ENCODE measurements at regions of chrX and their contacts with region 1.

Region 1: GRCh38 chrX:102712952-102713625 is 841 bp downstream of the GPRASP2 start:
- DNase-seq: peak; percentile 14 to 68
- ATAC-seq: peak; percentile 77 to 93 (median 82)
- H3K4me3 ChIP-seq: peak overlapping the region; percentile 60 to 81 (median 76)
- H3K27ac ChIP-seq: peak overlapping the region; percentile 50 to 88 (median 87)
- H3K4me1 ChIP-seq: peaks cover 0 to 4% (median 0%) of the 10 kb centered on the region in 9 donors
- H3K27me3 ChIP-seq: peaks cover 0 to 37% (median 0%) of the 10 kb centered on the region in 7 donors
- CTCF ChIP-seq: peak; percentile 28 to 69 (median 61)

Region 2: DNA sequence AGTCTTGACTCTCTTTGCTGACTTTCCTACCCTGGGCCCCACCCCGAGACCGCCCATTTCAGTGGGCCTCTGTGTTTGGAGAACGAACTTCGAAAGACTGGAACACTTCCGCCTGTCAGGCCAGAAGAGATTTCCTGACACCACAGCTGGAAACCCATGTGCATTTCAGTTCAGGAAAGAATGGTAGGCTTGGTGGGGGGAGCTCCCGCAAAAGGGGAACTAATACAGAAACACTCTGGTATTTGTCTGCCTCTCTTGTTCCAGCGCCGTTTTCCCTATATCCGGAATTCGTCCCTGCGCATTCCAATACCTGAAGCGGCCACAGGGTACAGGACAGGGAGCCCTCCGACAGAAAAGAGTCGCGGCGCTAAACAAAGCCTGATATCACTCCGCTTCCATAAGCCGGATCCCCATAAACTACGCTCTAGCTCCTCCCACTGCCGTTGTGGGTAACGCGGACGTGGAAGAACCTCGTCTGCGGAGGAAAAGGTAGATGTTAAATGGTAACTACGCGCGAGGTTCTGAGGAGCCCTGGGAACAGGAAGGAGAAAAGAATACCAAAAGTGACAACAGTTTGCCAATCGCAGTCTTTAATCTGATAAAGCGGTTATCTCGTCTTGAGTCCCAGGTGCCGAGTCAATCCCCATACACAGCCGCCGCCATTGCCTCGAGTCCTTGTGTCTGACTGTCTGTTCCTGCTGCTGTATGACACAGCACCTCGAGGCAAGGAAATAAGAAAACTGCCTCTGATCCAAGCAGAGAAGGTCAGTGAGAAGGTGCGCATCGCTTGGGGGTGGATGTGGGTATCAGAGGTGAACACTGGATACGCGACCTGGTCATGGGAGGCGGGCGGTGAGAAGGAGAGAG is 113.8 kb before region 1 on chrX and contains the start of gene ARMCX5:
- intact Hi-C with region 1: loop called in 2 of 10 experiments (anchors 2 to 10 kb)
- DNase-seq: peak; percentile 44 to 74
- ATAC-seq: peak; percentile 94 to 99 (median 98)
- H3K4me3 ChIP-seq: peak within 1 kb of the TSS; percentile 35 to 72 (median 62)
- H3K27ac ChIP-seq: peak within 1 kb of the TSS in 9 of 10 donors; percentile 30 to 84 (median 75)
- H3K4me1 ChIP-seq: peaks cover 0 to 5% (median 0%) of the 10 kb centered on the region in 9 donors
- H3K27me3 ChIP-seq: peaks cover 0 to 8% (median 0%) of the 10 kb centered on the region in 7 donors
- CTCF ChIP-seq: no peak
- total RNA-seq, gene ARMCX5: 5.0 to 7.2 (median 6.0) TPM

Region 3: GRCh38 chrX:102659790-102660757 is 53.0 kb before region 1 on chrX:
- intact Hi-C with region 1: loop called in 4 of 10 experiments (anchors 5 to 10 kb)
- DNase-seq: peak; percentile 84 to 86
- ATAC-seq: peak; percentile 94 to 100 (median 99)
- H3K4me3 ChIP-seq: peak overlapping the region; percentile 15 to 62 (median 56)
- H3K27ac ChIP-seq: peak overlapping the region in 8 of 10 donors; percentile 35 to 74 (median 56)
- H3K4me1 ChIP-seq: peaks cover 0 to 10% (median 5%) of the 10 kb centered on the region in 9 donors
- H3K27me3 ChIP-seq: peaks cover 0 to 6% (median 0%) of the 10 kb centered on the region in 7 donors
- CTCF ChIP-seq: no peak

Region 4: GRCh38 chrX:102745857-102746584 is 32.9 kb after region 1 on chrX:
- intact Hi-C with region 1: loop called in 1 of 10 experiments (anchors 1 kb)
- DNase-seq: peak; percentile 12 to 52
- ATAC-seq: peak; percentile 47 to 86 (median 71)
- H3K4me3 ChIP-seq: peak overlapping the region; percentile 47 to 69 (median 58)
- H3K27ac ChIP-seq: peak overlapping the region in 4 of 10 donors; percentile 27 to 58 (median 37)
- H3K4me1 ChIP-seq: peaks cover 0 to 5% (median 0%) of the 10 kb centered on the region in 9 donors
- H3K27me3 ChIP-seq: peaks cover 0 to 20% (median 0%) of the 10 kb centered on the region in 7 donors
- CTCF ChIP-seq: no peak

Region 5: DNA sequence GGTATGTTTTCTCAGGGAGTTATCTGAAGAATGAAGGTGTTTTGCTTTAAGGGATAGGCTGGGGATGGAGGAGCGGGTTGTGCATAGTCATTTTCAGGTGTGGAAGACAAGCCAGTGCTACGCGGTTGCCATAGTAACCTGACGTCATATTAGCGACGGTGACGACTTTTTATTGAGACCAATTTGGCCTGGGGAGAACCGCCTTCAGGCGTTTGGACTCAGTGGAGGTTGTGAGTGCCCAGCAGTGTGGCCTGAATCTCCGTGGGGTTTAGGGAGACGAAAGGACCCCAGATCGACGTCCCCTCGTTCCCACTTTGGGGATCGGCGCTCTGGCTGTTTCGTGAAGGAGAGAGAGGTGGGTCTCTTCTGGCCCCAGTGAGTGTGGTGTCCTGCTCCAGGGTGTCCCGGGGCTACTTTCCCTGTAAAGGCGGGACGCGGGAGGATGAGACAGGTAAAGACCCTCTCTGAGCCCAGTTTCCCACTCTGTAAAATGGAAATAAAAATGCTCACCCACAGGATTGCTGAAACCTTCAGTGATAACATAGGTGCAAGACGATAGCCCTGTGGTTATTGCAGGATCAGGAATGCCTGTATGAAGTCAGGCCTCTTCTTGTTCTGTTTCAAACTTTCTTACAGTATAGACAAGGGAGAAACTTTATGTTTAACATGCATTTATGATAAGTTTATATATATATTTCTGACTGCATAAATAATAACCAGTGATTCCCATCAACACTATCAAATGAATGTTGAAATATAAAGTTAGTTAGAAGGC is 56.1 kb after region 1 on chrX:
- intact Hi-C with region 1: loop called in 1 of 10 experiments (anchors 10 kb)
- DNase-seq: peak; percentile 24 to 80
- ATAC-seq: peak; percentile 87 to 96 (median 92)
- H3K4me3 ChIP-seq: peak overlapping the region; percentile 39 to 72 (median 62)
- H3K27ac ChIP-seq: peak overlapping the region in 5 of 10 donors; percentile 23 to 77 (median 48)
- H3K4me1 ChIP-seq: peaks cover 0 to 13% (median 8%) of the 10 kb centered on the region in 9 donors
- H3K27me3 ChIP-seq: no peaks in the 10 kb centered on the region
- CTCF ChIP-seq: no peak